Dorsolateral prefrontal cortex (tissue), 120 donors: ENCODE measurements at regions of chr6 and their contacts with region 1.

Region 1: GRCh38 chr6:158819213-158819909 is at the start of gene EZR:
- DNase-seq: peak in 3 of 10 donors; percentile 9 to 51 (median 49)
- H3K4me3 ChIP-seq: peak within 1 kb of the TSS; percentile 29 to 88 (median 72)
- H3K27ac ChIP-seq: peak within 1 kb of the TSS in 55 of 59 donors; percentile 29 to 94 (median 77)
- H3K27me3 ChIP-seq: peaks cover 0 to 21% (median 3%) of the 10 kb centered on the region in 45 donors
- CTCF ChIP-seq: no peak
- total RNA-seq, gene EZR: 41.2 to 336 (median 78.7) TPM

Region 2: DNA sequence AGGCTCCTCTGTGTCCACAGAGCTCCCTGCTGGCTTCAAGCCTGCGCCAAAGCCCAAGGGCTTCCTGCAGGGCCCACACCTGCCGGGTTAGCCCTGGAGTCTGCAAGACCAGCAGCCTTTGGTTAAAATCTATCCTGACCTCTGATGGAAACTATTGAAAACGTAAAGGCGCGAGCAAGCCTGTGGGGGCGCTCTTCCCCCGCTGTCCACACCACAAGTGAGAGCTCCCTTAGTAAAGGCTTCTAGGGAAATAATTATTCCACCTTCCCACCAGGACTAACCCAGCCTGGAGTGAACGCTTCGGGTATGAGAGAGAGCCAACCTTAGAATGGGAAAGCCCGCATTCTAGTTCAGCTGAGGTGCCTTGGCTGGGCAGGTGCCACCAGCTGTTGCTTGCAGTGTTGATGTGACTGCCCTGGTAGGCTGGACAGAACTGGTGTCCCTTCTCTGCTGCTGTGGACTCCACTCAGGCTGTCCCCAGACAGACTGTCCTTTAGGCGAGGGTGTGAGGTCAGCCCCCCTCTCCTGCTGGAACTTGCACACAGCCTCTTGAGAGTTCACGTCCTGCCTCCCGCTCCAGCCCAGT is 100.8 kb before region 1 on chr6:
- intact Hi-C with region 1: loop called in 1 of 2 experiments (anchors 10 kb)
- DNase-seq: peak in 2 of 10 donors; percentile 12 to 26
- H3K4me3 ChIP-seq: no peak overlapping the region
- H3K27ac ChIP-seq: no peak overlapping the region
- H3K27me3 ChIP-seq: no peaks in the 10 kb centered on the region
- CTCF ChIP-seq: peak in 52 of 56 donors; percentile 36 to 78 (median 58)